Endothelial cell of umbilical vein (primary cell): ENCODE measurements at regions of chr11 and their contacts with region 1.

Region 1: GRCh38 chr11:35822815-35823495 is 120.9 kb upstream of the LDLRAD3 start:
- DNase-seq: no peak
- H3K4me3 ChIP-seq: no peak overlapping the region
- H3K27ac ChIP-seq: no peak overlapping the region
- H3K4me1 ChIP-seq: peaks cover 8% of the 10 kb centered on the region
- H3K27me3 ChIP-seq: no peaks in the 10 kb centered on the region
- CTCF ChIP-seq: no peak
- POLR2A ChIP-seq: no peak

Region 2: DNA sequence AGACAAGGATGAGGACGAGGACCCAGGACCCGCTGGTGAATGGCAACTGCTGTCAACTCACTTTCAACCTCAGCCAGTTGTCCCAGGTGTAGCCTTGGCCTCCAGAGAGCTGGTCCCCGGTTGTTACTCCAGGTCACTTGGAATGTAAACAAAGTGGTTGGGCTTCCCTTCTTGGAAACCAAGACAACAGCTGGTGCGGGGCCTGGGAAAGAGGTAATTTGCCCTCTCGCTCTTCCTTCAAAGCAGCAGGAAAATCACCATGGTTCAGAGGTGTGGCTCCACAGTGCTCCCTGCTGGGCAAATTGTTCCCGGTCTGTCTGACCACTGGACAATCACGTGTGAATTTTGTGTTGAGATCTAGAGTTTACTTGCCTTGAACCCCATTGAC is 418.6 kb before region 1 on chr11:
- CTCF ChIA-PET with region 1: no interaction called
- POLR2A ChIA-PET with region 1: no interaction called
- dilution Hi-C with region 1: no loop called
- intact Hi-C with region 1: no loop called
- DNase-seq: peak; percentile 25
- H3K4me3 ChIP-seq: no peak overlapping the region
- H3K27ac ChIP-seq: no peak overlapping the region
- H3K4me1 ChIP-seq: no peaks in the 10 kb centered on the region
- H3K27me3 ChIP-seq: peaks cover 5 to 19% of the 10 kb centered on the region in 2 experiments
- CTCF ChIP-seq: peak; percentile 51 to 52
- POLR2A ChIP-seq: no peak

Region 3: DNA sequence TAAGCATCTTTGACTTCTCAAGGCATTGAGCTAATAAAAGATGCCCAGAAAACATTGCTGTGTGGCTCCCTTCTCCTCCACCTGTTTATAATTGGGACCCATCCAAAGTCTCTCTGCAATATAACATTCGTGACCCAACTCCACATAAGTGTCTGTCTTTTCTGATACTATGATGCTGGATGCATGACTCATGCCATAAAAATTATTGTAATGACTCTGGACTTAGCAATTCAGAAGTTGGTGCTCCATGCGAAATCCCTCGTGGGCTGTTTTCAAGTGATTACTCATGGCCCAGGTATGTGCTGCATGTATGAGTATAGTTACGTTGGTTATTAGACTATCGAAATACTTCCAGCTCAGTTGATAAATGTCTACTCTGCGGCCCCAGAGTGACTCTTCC is 193.0 kb before region 1 on chr11:
- CTCF ChIA-PET with region 1: interaction called, 19 read pairs
- POLR2A ChIA-PET with region 1: no interaction called
- dilution Hi-C with region 1: no loop called
- intact Hi-C with region 1: no loop called
- DNase-seq: peak; percentile 93
- H3K4me3 ChIP-seq: no peak overlapping the region
- H3K27ac ChIP-seq: peak overlapping the region; percentile 65
- H3K4me1 ChIP-seq: peaks cover 29% of the 10 kb centered on the region
- H3K27me3 ChIP-seq: no peaks in the 10 kb centered on the region
- CTCF ChIP-seq: no peak
- POLR2A ChIP-seq: no peak

Region 4: DNA sequence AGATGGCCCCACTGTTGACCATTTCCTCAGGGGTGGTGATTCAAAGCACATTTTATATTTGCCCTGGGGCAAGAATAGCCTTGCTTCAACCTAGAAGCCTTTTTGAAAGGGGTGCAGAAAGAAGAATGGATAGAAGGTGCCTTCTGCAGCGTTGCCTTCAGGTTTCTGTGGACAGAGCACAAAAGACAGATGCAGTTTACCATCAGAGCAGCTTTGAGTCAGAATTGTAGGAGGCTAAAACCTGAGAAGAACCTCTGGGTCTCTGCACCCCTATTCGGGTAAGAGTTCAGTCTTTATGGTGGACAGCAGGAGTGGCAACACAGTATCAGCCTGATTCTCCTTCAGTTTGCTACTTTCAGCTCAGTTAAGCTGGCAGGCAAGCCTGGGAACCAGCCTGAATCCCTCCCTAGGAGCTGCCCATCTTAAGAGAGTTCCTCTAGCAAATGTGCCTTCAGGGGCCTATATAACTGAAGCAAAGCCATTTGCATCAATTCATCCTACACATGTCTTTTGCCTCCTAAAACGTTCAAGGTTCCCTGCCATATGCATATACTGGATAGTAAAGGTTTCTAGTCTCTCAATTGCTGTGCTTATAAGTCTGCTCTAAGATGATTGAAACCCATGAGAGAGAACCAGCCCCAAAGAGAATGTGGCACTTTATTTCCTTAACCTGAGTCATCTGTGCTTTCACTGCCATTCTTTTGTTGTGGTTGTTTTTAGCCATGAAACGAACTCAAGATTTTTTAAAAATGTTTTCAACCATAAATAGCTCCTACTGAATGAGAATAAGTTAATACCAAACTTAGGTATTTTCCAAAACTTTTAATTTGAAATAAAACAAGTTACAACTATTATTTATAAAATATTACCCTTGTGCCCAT is 37.4 kb before region 1 on chr11:
- CTCF ChIA-PET with region 1: interaction called, 19 read pairs
- POLR2A ChIA-PET with region 1: no interaction called
- dilution Hi-C with region 1: no loop called
- intact Hi-C with region 1: no loop called
- DNase-seq: peak; percentile 59
- H3K4me3 ChIP-seq: no peak overlapping the region
- H3K27ac ChIP-seq: no peak overlapping the region
- H3K4me1 ChIP-seq: peaks cover 15% of the 10 kb centered on the region
- H3K27me3 ChIP-seq: no peaks in the 10 kb centered on the region
- CTCF ChIP-seq: no peak
- POLR2A ChIP-seq: no peak

Region 5: DNA sequence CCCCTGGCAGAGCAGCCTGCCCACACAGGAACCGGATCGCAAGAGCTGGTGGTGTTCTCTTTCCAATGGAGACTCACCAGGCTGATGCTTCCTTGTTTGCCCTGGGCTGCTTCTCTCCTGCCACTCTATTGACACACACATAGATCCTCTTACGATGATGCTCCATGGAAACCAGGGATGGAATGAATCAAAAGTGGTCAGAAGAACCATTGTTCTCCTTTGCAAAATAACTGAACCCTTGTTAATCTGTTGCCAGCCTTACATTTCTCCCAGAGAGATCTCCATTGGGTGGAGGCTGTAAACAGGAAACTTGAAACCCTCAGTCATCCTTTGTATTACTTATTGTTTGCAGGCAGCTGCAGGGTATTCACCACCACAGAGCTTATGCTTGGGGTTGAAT is 96.3 kb after region 1 on chr11:
- CTCF ChIA-PET with region 1: interaction called, 16 read pairs
- POLR2A ChIA-PET with region 1: no interaction called
- dilution Hi-C with region 1: no loop called
- intact Hi-C with region 1: no loop called
- DNase-seq: peak; percentile 77
- H3K4me3 ChIP-seq: no peak overlapping the region
- H3K27ac ChIP-seq: no peak overlapping the region
- H3K4me1 ChIP-seq: peaks cover 22% of the 10 kb centered on the region
- H3K27me3 ChIP-seq: peaks cover 3 to 5% of the 10 kb centered on the region in 2 experiments
- CTCF ChIP-seq: no peak
- POLR2A ChIP-seq: no peak

Region 6: GRCh38 chr11:36015799-36016198 is 192.8 kb after region 1 on chr11:
- CTCF ChIA-PET with region 1: interaction called, 16 read pairs
- POLR2A ChIA-PET with region 1: no interaction called
- dilution Hi-C with region 1: no loop called
- intact Hi-C with region 1: no loop called
- DNase-seq: no peak
- H3K4me3 ChIP-seq: no peak overlapping the region
- H3K27ac ChIP-seq: no peak overlapping the region
- H3K4me1 ChIP-seq: peaks cover 12% of the 10 kb centered on the region
- H3K27me3 ChIP-seq: no peaks in the 10 kb centered on the region
- CTCF ChIP-seq: no peak
- POLR2A ChIP-seq: no peak

Region 7: DNA sequence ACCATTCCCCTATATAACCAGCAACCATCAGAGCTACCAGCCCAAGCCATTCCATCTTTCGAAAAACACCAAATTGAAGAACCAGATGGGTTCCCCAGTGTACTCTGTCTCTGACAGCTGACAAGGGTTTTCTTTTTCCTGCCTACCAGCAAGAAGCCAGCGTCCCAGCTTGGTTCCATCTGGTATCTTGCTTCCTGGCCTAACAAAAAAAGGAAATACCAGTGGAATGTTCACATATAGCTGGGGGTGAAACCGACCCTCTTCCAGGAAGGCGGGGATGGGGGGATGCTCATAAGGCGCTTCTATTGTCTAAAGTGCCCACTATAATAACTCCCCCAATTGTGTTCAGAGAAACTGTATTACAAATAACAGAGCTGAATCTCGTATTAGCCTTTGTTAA is 293.2 kb after region 1 on chr11:
- CTCF ChIA-PET with region 1: interaction called, 32 read pairs
- POLR2A ChIA-PET with region 1: no interaction called
- dilution Hi-C with region 1: no loop called
- intact Hi-C with region 1: no loop called
- DNase-seq: peak; percentile 88
- H3K4me3 ChIP-seq: no peak overlapping the region
- H3K27ac ChIP-seq: peak overlapping the region; percentile 76
- H3K4me1 ChIP-seq: peaks cover 26% of the 10 kb centered on the region
- H3K27me3 ChIP-seq: no peaks in the 10 kb centered on the region
- CTCF ChIP-seq: no peak
- POLR2A ChIP-seq: no peak

Region 8: GRCh38 chr11:36478700-36479329 is 655.9 kb after region 1 on chr11:
- CTCF ChIA-PET with region 1: interaction called, 35 read pairs
- POLR2A ChIA-PET with region 1: no interaction called
- dilution Hi-C with region 1: no loop called
- intact Hi-C with region 1: no loop called
- DNase-seq: peak; percentile 60
- H3K4me3 ChIP-seq: no peak overlapping the region
- H3K27ac ChIP-seq: no peak overlapping the region
- H3K4me1 ChIP-seq: no peaks in the 10 kb centered on the region
- H3K27me3 ChIP-seq: no peaks in the 10 kb centered on the region
- CTCF ChIP-seq: peak; percentile 47 to 50
- POLR2A ChIP-seq: no peak